ENCODE measurements at regions of chr16 and their contacts with region 1.

Region 1: DNA sequence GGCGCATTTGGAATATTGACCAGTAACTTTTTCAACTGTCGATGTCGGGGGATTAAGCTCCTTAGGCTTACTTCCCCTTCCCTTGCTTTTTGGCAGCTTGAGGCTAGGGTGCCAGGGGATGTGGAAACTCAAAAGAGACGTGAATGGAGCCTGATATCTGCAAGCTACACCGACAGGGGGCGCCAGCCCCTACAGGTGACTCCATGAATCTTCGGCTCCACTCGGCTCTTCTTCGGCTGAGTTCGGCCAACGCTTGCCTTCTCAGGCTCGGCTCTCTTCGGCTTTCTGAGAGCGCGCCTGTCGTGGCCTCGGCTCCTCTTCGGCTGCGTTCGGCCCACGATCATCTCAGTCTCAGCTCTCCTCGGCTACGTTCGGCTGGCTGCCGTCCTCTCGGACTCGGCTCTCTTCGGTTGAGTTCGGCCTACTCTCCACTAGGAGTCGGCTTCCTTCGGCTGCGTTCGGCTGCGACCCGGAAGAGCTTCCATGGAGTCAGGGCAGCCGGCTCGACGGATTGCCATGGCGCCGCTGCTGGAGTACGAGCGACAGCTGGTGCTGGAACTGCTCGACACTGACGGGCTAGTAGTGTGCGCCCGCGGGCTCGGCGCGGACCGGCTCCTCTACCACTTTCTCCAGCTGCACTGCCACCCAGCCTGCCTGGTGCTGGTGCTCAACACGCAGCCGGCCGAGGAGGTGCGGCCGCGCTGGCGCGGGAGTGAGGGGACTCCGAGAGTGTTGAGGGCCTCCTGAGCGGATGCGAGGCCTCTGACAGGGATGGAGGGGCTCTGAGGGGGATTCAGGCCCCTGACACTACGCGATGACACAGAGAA is at the start of gene ERCC4:
- DNase-seq: peak; percentile 96 to 100 (median 99)

Region 2: DNA sequence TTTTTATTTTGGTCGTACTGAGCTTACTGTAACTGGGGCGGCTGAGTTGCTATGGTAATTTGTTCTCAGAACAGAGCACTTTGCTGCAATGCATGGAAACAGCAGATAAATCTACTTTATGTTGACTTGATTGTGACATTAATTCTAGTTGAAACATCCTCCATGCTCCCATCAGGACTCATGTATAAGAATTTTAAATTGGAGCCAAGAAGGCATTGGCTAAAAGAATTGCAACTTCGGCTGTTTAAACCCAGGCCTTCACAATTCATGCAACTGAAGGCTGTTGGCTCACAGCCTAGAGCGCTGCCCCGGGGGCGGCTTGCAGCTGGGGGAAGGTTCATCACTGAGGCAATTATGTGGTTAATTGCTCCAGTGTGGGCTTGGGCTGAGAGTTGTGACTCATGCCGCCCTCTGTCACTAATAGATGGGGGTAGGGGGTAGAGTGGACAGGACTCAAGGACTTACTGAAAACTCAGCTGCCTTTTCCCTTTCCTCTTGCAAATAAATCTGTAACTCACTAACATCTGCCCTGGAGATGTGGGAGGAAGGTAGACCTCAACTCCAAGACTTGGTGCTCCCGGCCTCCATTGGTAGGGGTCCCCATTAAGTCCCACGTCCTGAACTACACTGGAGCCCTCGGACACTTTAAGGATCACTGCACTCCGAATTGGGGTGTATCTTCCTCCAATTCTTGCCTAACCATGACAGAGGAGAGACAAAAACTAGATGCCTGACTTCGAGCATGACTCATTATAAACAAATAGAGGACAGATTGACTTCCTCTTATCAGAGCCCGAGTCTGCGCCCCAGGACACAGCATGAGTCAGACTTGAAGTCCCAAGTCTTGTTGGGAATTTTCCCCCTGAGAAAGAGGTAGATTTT is 37.5 kb after region 1 on chr16:
- intact Hi-C with region 1: no loop called
- DNase-seq: peak in 4 of 10 donors; percentile 35 to 86 (median 64)

Region 3: DNA sequence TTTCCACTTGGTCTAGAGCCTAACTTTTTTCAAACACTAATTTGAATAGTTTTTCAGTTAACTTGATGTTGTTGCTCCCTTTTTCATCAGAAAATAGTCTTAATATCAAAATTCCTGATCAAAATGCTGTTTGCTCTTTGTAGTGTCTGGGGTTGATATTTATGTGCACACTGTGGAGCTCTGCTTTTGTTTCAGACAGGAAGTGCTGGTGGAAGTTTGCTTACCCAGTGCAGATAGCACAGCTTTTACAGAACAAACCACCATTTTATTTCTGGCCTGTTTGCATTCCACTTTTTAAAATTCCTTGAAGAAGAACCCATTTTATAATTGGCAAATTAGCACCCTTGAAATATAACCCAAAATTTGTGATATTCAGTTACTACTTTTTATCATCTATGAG is 276.6 kb after region 1 on chr16:
- intact Hi-C with region 1: loop called (anchors 5 kb)
- DNase-seq: no peak

Region 4: GRCh38 chr16:14285513-14286385 is 365.9 kb after region 1 on chr16:
- intact Hi-C with region 1: loop called (anchors 5 kb)
- DNase-seq: peak; percentile 88 to 99 (median 90)